Gastrocnemius medialis (tissue), 4 donors: ENCODE measurements at regions of chr11 and their contacts with region 1.

Region 1: DNA sequence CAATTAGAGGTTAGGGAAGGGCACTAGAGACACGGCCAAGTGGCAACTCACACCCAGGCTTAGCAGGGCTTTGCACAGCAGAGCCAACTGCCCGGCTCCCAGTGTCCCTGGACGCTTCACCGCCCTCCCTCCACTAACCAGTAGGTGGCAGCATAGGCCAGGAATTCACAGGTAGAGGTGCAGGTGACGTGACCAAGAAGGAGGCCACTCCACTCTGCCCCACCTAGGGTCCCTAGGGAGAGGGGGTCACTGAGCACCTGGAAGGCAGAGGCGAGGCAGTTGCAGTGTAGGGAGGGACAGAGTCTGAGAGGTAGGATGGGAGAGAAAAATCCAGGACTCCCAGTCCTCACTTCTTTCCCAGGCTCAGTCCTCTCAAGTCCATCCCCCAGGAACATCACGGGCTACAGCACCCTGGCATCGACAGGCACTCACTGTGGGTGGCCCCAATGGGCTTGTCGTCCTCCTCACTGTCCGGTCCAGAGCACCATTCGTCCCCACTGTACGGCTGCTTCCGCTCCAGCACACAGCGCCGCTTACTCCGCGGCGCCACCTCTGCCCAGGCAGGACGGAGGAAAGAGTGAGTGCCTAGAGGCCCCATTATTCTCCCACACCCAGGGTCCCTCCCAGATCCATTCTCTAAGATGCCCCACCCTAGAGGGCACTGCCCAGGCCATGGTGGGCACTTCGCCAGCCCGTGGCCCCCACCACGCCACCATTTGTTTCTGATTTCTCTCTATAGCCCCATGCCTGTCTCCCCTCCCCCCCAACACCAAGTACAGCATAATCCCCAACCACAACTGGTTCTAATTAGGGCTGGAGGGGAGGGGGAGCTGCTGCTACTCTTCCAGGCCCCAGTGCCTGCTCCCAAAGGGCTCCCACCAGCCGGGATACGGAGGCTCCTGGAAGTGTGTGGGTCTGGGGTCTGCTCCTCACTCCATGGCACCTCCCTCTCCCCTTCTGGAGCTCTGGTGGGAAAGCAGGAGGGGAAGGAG is 18.4 kb downstream of the BCL9L start:
- DNase-seq: peak; percentile 72 to 87
- ATAC-seq: peak; percentile 41 to 48
- H3K4me3 ChIP-seq: no peak overlapping the region
- H3K27ac ChIP-seq: peak overlapping the region; percentile 89 to 100 (median 96)
- H3K4me1 ChIP-seq: peaks cover 52 to 54% of the 10 kb centered on the region in 2 donors
- H3K27me3 ChIP-seq: no peaks in the 10 kb centered on the region
- CTCF ChIP-seq: peak; percentile 94 to 99 (median 98)
- POLR2A ChIP-seq: no peak

Region 2: DNA sequence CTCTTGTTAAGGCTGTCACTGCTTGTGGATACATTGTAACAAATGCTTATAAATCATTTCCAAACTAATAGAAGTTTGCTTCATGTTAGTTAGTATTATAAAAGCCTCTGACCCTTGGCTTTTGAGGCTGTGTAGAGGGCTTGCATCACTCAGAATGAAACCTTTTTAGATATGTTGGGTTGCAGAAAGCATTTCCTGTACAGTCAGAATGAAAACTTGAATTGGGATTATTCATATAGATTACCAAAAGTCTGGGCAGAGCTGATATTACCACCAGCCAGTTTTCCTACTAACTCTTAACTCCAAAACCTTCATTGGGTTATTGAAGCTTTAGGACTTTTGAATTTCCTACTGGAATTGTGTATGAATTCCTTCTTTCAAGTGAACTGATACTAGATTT is 459.1 kb before region 1 on chr11:
- in situ Hi-C with region 1: no loop called
- intact Hi-C with region 1: no loop called
- DNase-seq: no peak
- ATAC-seq: no peak
- H3K4me3 ChIP-seq: no peak overlapping the region
- H3K27ac ChIP-seq: no peak overlapping the region
- H3K4me1 ChIP-seq: peaks cover 26 to 29% of the 10 kb centered on the region in 2 donors
- H3K27me3 ChIP-seq: no peaks in the 10 kb centered on the region
- CTCF ChIP-seq: no peak
- POLR2A ChIP-seq: no peak

Region 3: GRCh38 chr11:118956094-118956846 is 48.9 kb after region 1 on chr11 and contains the start of gene UPK2:
- in situ Hi-C with region 1: loop called in 3 of 4 experiments (anchors 10 kb)
- intact Hi-C with region 1: loop called (anchors 1 kb)
- DNase-seq: peak; percentile 74 to 82
- ATAC-seq: peak; percentile 95 to 97
- H3K4me3 ChIP-seq: no peak within 1 kb of the TSS
- H3K27ac ChIP-seq: no peak within 1 kb of the TSS
- H3K4me1 ChIP-seq: no peaks in the 10 kb centered on the region
- H3K27me3 ChIP-seq: no peaks in the 10 kb centered on the region
- CTCF ChIP-seq: peak; percentile 94 to 97 (median 96)
- POLR2A ChIP-seq: no peak
- total RNA-seq, gene UPK2: not detected

Region 4: DNA sequence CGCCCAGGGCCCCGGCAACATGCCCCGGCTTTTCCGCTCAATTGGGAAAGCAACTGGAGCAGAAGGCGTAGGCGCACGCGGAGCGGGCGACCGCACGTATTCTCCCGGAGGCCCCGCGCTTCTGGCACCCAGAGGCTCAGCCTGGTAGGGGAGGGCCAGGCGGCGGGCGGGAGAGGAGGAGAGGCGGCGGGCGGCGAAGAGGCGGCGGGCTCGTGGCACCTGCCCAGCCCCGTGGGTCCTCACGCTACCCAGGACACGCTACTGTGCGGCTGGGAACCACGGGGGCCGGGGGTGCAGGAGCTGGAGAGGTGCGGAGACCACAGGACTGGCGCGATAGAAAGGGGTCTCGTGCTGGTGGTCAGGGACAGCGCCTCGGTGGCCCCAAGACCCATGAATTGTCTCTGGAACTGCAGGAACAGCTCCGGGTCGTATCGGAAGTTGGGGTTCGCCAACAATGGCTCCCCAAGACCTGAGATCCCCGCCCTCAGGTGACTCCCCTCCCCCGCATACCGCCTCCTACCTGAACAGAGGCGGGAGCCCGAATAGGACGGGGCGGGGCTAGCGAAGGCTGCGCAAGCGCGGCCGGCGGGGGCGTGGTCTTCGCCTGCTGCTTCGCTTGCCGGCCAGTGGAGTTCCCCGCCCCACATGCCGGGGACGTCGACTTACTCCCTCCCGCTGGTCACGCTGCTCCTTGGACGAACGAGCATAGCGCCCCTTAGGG is 123.1 kb after region 1 on chr11 and contains the start of gene SLC37A4:
- in situ Hi-C with region 1: no loop called
- intact Hi-C with region 1: loop called (anchors 5 kb)
- DNase-seq: peak; percentile 98 to 99
- ATAC-seq: peak; percentile 77
- H3K4me3 ChIP-seq: peak within 1 kb of the TSS; percentile 83 to 94 (median 91)
- H3K27ac ChIP-seq: peak within 1 kb of the TSS; percentile 92 to 98 (median 94)
- H3K4me1 ChIP-seq: peaks cover 48 to 50% of the 10 kb centered on the region in 2 donors
- H3K27me3 ChIP-seq: no peaks in the 10 kb centered on the region
- CTCF ChIP-seq: peak; percentile 87 to 92 (median 90)
- POLR2A ChIP-seq: peak; percentile 82 to 85
- total RNA-seq, gene SLC37A4: 29.7 to 72.9 (median 56.4) TPM